Left colon (tissue), 2 donors: ENCODE measurements at regions of chr1 and their contacts with region 1.

Region 1: DNA sequence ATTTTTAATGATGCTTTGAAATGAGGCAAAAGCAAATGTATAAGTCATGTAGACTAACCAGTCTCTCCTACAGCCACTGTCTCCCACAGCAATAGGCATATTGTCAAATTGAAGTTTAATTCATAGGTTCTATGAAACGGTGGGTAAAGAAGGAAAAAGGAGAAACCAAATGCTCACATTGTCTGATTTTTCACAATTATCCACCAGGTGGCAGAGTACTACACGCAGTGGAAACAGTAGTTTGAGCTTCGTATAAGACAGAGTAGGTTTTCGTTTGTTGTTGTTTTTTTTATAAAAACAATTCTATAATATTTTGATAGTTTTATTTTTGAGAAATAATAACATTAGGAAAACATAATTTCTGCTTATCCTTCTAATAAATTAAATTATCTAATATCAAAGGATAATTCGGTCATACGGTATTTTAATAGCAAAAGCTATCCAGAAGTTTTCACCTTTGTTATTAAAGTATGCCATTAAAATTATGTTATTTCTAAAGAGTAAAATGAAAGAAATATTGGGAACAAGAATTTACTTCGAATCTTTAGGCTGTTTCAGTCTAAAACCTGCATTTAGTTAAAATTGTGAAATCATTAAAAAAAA is 39.1 kb downstream of the TYW3 start:
- DNase-seq: no peak
- ATAC-seq: peak; percentile 45

Region 2: DNA sequence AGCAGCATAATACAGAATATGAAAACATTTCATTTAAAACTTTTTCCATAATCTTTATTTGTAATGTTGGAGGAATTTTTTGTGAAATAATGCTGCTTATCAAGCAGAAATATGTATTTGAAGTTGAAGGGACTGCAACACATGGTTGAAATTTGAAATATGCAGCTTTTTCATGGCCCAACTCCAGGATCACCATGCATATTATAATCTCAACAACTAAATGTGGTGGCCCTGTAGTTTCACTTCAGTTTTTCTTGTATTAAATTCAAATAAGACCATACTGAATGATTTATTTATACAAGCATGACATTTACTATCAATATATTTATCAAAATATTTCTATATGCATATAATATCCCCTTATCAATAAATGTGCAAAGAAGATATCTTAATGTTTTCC is 204.5 kb after region 1 on chr1:
- intact Hi-C with region 1: no loop called
- DNase-seq: no peak
- ATAC-seq: no peak

Region 3: GRCh38 chr1:75203415-75204277 is 431.6 kb after region 1 on chr1:
- intact Hi-C with region 1: loop called in 1 of 2 experiments (anchors 5 kb)
- DNase-seq: no peak
- ATAC-seq: peak; percentile 65